Brain microvascular endothelial cell (primary cell): ENCODE measurements at regions of chr17 and their contacts with region 1.

Region 1: GRCh38 chr17:80426681-80427326 is 11.8 kb downstream of the ENDOV start:
- DNase-seq: peak; percentile 42
- H3K4me3 ChIP-seq: no peak overlapping the region
- H3K27ac ChIP-seq: no peak overlapping the region
- H3K27me3 ChIP-seq: no peaks in the 10 kb centered on the region
- CTCF ChIP-seq: peak; percentile 92

Region 2: DNA sequence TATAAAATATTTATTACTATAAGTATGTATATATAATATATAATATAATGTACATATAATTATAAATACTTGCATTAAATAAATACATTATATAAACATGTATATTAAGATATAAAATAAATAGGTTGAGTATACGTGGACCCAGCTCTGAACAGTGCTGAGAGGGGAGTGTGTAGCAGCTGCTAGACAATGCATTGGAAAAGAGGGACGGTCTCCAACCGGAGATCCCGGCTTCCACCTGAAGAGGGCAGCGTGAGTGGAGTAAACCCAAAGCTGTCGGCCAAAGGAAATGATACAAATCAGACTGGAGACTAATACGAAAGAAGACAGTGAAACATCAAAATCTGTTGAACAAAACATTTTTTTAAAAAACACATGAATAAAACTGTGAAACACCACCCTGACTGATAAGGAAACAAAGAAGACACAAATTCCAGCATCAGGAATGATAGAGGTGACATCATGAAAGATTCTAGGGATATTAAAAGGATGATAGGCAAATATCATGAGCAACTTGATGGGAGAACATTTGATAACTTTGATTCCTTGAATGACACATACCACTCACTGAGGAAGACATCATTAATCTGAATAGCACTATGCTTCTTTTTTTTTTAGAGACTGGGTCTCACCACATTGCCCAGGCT is 439.5 kb after region 1 on chr17:
- in situ Hi-C with region 1: loop called (anchors 25 kb)
- DNase-seq: peak; percentile 75
- H3K4me3 ChIP-seq: no peak overlapping the region
- H3K27ac ChIP-seq: no peak overlapping the region
- H3K27me3 ChIP-seq: no peaks in the 10 kb centered on the region
- CTCF ChIP-seq: peak; percentile 91

Region 3: GRCh38 chr17:81523475-81524340 is 1096.9 kb after region 1 on chr17:
- in situ Hi-C with region 1: no loop called
- DNase-seq: no peak
- H3K4me3 ChIP-seq: no peak overlapping the region
- H3K27ac ChIP-seq: no peak overlapping the region
- H3K27me3 ChIP-seq: peaks cover 1% of the 10 kb centered on the region
- CTCF ChIP-seq: no peak